Esophagus squamous epithelium (tissue), 5 donors: ENCODE measurements at regions of chr5 and their contacts with region 1.

Region 1: GRCh38 chr5:6636293-6636692 is 3.1 kb downstream of the SRD5A1 start:
- DNase-seq: no peak
- H3K4me3 ChIP-seq: peak overlapping the region in 2 of 4 donors; percentile 2 to 14
- H3K27ac ChIP-seq: peak overlapping the region; percentile 88 to 96 (median 91)
- H3K4me1 ChIP-seq: peaks cover 18 to 75% (median 25%) of the 10 kb centered on the region in 3 donors
- H3K27me3 ChIP-seq: no peaks in the 10 kb centered on the region
- CTCF ChIP-seq: peak in 1 of 6 experiments; percentile 9
- POLR2A ChIP-seq: peak in 2 of 4 donors; percentile 11 to 42

Region 2: GRCh38 chr5:5588887-5589826 is 1047.1 kb before region 1 on chr5:
- intact Hi-C with region 1: no loop called
- DNase-seq: no peak
- H3K4me3 ChIP-seq: no peak overlapping the region
- H3K27ac ChIP-seq: no peak overlapping the region
- H3K4me1 ChIP-seq: no peaks in the 10 kb centered on the region
- H3K27me3 ChIP-seq: no peaks in the 10 kb centered on the region
- CTCF ChIP-seq: no peak
- POLR2A ChIP-seq: no peak

Region 3: DNA sequence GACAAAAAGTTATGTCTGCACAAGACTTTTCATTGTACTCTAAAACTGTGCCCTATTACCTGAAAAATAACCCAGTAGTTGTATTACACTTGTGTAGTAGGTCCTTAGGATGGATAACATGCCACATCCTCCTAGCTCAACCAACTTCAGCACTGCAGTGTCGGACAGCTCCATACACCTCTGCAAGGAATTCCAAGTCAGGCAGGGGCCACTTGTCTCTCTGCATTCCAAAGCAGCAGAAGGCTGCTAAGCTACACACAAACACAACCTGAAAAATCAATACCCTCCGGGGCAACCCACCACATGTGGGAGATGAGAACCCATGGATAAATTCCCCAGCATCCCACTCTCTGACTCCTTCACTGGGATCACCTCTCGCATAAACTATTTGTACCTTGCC is 308.1 kb before region 1 on chr5:
- intact Hi-C with region 1: no loop called
- DNase-seq: no peak
- H3K4me3 ChIP-seq: no peak overlapping the region
- H3K27ac ChIP-seq: no peak overlapping the region
- H3K4me1 ChIP-seq: no peaks in the 10 kb centered on the region
- H3K27me3 ChIP-seq: no peaks in the 10 kb centered on the region
- CTCF ChIP-seq: no peak
- POLR2A ChIP-seq: no peak

Region 4: DNA sequence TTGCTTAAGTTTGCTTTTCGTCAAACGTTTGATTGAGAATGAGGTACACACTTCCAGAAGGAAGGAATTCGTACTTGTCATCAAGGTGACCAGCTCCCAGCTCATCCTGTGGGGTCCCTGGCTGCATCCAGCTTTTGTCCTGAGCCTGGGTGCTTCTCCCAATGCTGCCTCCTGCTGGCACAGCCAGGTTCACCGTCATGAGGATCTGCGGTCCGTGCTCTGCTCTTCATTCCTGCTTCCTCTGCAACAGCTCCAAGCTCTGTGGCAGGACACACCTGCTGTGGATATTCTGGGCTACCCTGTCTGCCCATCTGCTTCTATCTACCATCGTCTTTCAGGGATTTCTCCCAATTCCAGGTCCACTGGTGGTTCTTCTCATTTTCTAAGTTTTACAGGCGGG is 200.9 kb before region 1 on chr5:
- intact Hi-C with region 1: no loop called
- DNase-seq: no peak
- H3K4me3 ChIP-seq: no peak overlapping the region
- H3K27ac ChIP-seq: no peak overlapping the region
- H3K4me1 ChIP-seq: no peaks in the 10 kb centered on the region
- H3K27me3 ChIP-seq: peaks cover 0 to 38% (median 0%) of the 10 kb centered on the region in 4 donors
- CTCF ChIP-seq: peak in 1 of 6 experiments; percentile 43
- POLR2A ChIP-seq: no peak

Region 5: GRCh38 chr5:6510132-6510531 is 126.2 kb before region 1 on chr5:
- intact Hi-C with region 1: no loop called
- DNase-seq: no peak
- H3K4me3 ChIP-seq: no peak overlapping the region
- H3K27ac ChIP-seq: no peak overlapping the region
- H3K4me1 ChIP-seq: no peaks in the 10 kb centered on the region
- H3K27me3 ChIP-seq: no peaks in the 10 kb centered on the region
- CTCF ChIP-seq: no peak
- POLR2A ChIP-seq: no peak

Region 6: DNA sequence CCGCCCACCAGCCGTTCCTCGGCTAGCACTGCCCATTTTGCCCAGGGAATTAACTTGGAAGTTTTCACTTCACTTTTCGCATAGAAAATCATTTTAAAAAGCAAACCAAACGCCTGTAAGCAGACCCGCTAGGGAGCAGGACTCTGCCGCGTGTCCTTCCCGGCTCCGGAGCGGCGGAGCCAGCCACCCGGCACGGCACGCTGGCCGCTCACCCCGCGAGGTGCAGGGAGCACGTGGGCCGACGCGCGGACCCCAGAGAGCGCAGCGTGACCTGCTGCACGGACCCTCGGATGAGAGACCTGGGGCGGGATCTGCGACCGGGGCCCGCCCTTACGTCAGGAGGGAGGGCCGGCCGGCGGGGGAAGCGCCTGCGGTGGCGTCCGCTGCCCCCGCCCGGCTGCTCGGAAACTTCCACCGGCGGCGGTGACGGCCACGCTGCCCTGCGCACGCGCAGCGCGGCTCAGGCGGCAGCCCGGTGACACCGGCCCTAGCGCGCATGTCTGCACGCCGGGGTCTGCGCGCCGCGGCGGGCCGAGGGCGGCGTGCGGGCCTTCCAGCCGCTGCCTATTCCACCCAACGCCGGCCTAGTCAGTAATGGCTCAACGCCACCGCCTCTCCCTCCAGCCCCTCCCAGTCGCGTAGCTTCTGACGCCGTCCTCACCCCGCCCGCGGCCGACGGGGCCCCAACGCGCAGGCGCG is 76.4 kb after region 1 on chr5:
- intact Hi-C with region 1: loop called (anchors 5 kb)
- DNase-seq: no peak
- H3K4me3 ChIP-seq: peak overlapping the region; percentile 70 to 97 (median 86)
- H3K27ac ChIP-seq: peak overlapping the region; percentile 93 to 99 (median 95)
- H3K4me1 ChIP-seq: peaks cover 30 to 43% (median 31%) of the 10 kb centered on the region in 3 donors
- H3K27me3 ChIP-seq: no peaks in the 10 kb centered on the region
- CTCF ChIP-seq: peak in 1 of 6 experiments; percentile 16
- POLR2A ChIP-seq: peak in 3 of 4 donors; percentile 57 to 83 (median 75)